Naive thymus-derived CD4-positive, alpha-beta T cell (primary cell): ENCODE measurements at regions of chr6 and their contacts with region 1.

Region 1: DNA sequence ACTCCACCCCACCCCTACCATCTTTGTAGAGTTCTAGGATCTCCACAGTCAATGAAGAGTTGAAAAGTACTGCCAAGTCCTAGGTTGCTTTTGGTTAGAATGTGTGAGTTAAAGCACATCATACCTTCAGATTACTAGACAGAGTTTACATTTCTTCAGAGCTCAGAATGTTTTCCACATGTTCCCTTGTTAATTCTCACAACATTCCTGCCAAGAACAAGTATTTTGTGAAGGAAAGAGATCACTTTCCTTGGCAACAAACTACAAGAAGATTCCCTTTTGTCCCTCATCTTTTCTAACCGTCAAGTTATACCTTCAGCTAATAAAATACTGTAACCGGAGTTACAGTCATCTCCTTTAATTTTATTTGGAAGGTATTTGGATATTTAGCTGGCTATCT is 266.8 kb downstream of the ZFAND3 start:
- DNase-seq: no peak
- ATAC-seq: no peak
- H3K4me3 ChIP-seq: no peak overlapping the region
- H3K4me3 Mint-ChIP-seq: no peak overlapping the region
- H3K27ac ChIP-seq: no peak overlapping the region
- H3K27ac Mint-ChIP-seq: no peak overlapping the region
- H3K4me1 ChIP-seq: no peaks in the 10 kb centered on the region
- H3K4me1 Mint-ChIP-seq: peaks cover 0 to 38% (median 14%) of the 10 kb centered on the region in 7 donors
- H3K27me3 ChIP-seq: no peaks in the 10 kb centered on the region
- H3K27me3 Mint-ChIP-seq: no peaks in the 10 kb centered on the region

Region 2: GRCh38 chr6:38057994-38058393 is 28.4 kb before region 1 on chr6:
- CTCF ChIA-PET with region 1: no interaction called
- POLR2A ChIA-PET with region 1: no interaction called
- intact Hi-C with region 1: loop called in 1 of 2 experiments (anchors 2 kb)
- DNase-seq: peak in 6 of 9 donors; percentile 1 to 42 (median 34)
- ATAC-seq: peak; percentile 65
- H3K4me3 ChIP-seq: no peak overlapping the region
- H3K4me3 Mint-ChIP-seq: no peak overlapping the region
- H3K27ac ChIP-seq: no peak overlapping the region
- H3K27ac Mint-ChIP-seq: peak overlapping the region in 1 of 9 donors; percentile 1
- H3K4me1 ChIP-seq: peaks cover 0 to 7% of the 10 kb centered on the region in 2 donors
- H3K4me1 Mint-ChIP-seq: peaks cover 17 to 52% (median 45%) of the 10 kb centered on the region in 7 donors
- H3K27me3 ChIP-seq: no peaks in the 10 kb centered on the region
- H3K27me3 Mint-ChIP-seq: no peaks in the 10 kb centered on the region